ENCODE measurements at regions of chr1 and their contacts with region 1.

Region 1: DNA sequence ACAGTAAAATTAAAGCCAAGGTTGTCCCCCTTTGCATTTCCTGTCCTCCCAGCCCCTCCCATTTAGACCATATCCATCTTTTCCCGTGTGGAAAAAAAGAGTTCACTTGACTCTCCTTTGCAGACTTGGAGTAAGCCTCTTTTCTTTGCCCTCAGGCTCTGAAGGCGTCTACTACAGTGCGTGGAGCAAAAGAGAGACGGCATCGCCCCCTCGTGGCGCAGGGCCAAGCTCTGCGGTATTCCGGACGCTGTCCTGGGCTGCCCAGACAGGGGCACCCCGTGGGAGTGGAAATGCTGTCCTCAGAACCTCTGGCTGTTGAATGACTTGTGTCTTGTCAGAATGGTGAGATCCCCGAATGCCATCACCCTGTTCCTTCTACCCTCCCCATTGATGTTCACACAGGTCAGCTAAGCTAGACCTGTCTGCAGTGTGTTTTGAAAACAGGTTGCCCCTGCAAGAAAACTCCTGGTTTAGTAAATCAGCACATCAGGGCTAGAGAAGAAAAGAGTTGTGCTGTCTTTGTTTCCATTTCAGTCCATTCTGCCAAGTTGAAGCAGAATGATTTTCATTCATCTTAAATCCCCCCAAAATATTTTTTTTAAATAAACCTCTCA is 12.3 kb upstream of the GJA8 start:
- DNase-seq: peak; percentile 80
- H3K4me3 ChIP-seq: no peak overlapping the region
- H3K27ac ChIP-seq: no peak overlapping the region
- H3K4me1 ChIP-seq: no peaks in the 10 kb centered on the region
- H3K27me3 ChIP-seq: no peaks in the 10 kb centered on the region
- CTCF ChIP-seq: peak; percentile 80

Region 2: DNA sequence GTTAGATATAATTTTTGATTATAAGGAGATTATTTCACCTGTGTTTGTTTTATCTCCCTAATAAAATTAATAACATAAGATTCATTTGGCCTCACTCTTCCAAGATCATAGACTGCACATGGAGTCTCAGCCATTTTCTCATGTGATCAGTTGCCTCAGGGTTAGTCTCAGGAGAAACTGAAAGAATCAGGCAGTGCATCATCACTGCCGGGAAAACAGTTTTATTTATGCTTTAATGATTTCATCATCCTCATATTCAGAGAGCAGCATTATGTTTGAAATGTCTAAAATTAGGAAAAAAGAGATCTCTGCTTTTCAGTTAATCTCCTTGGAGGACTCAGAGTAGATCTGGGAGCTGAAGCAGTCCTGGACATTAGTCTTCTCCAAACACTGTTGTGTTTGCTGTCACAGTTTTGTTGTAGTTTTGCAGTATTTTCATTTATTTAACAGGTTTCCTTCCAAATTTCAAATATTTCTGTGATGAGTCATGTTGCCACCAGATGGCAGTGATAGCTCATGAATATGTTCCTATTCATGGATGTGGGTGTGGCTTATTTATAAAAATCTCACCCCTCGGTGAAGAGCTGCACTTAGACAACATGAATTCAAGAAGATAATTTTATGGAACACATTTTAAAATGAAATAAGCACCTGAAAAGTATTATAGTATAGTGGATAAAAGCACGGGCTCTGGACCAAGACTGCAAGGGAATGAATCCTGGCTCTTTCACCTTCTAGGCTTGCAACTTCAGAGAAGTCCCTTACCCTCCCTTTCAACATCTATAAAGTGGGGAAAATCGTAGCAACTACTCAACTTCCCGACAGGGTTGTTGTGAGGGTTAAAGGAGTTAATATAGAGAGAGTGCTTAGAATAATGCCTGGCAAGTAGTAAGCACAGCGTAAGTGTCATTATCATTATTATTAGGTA is 616.6 kb before region 1 on chr1:
- CTCF ChIA-PET with region 1: interaction called, 5 read pairs
- POLR2A ChIA-PET with region 1: no interaction called
- intact Hi-C with region 1: loop called (anchors 5 kb)
- DNase-seq: peak; percentile 80
- H3K4me3 ChIP-seq: no peak overlapping the region
- H3K27ac ChIP-seq: peak overlapping the region; percentile 17
- H3K4me1 ChIP-seq: peaks cover 10% of the 10 kb centered on the region
- H3K27me3 ChIP-seq: no peaks in the 10 kb centered on the region
- CTCF ChIP-seq: peak; percentile 77

Region 3: GRCh38 chr1:147494998-147495580 is 395.2 kb before region 1 on chr1:
- CTCF ChIA-PET with region 1: interaction called, 7 read pairs
- POLR2A ChIA-PET with region 1: no interaction called
- intact Hi-C with region 1: loop called (anchors 1 kb)
- DNase-seq: peak; percentile 84
- H3K4me3 ChIP-seq: no peak overlapping the region
- H3K27ac ChIP-seq: no peak overlapping the region
- H3K4me1 ChIP-seq: no peaks in the 10 kb centered on the region
- H3K27me3 ChIP-seq: no peaks in the 10 kb centered on the region
- CTCF ChIP-seq: peak; percentile 94

Region 4: GRCh38 chr1:147640553-147641165 is 249.6 kb before region 1 on chr1:
- CTCF ChIA-PET with region 1: no interaction called
- POLR2A ChIA-PET with region 1: no interaction called
- intact Hi-C with region 1: loop called (anchors 5 kb)
- DNase-seq: peak; percentile 91
- H3K4me3 ChIP-seq: no peak overlapping the region
- H3K27ac ChIP-seq: no peak overlapping the region
- H3K4me1 ChIP-seq: no peaks in the 10 kb centered on the region
- H3K27me3 ChIP-seq: no peaks in the 10 kb centered on the region
- CTCF ChIP-seq: peak; percentile 81

Region 5: GRCh38 chr1:147700042-147701006 is 190.0 kb before region 1 on chr1:
- CTCF ChIA-PET with region 1: no interaction called
- POLR2A ChIA-PET with region 1: no interaction called
- intact Hi-C with region 1: loop called (anchors 5 kb)
- DNase-seq: peak; percentile 82
- H3K4me3 ChIP-seq: no peak overlapping the region
- H3K27ac ChIP-seq: no peak overlapping the region
- H3K4me1 ChIP-seq: no peaks in the 10 kb centered on the region
- H3K27me3 ChIP-seq: no peaks in the 10 kb centered on the region
- CTCF ChIP-seq: peak; percentile 92

Region 6: DNA sequence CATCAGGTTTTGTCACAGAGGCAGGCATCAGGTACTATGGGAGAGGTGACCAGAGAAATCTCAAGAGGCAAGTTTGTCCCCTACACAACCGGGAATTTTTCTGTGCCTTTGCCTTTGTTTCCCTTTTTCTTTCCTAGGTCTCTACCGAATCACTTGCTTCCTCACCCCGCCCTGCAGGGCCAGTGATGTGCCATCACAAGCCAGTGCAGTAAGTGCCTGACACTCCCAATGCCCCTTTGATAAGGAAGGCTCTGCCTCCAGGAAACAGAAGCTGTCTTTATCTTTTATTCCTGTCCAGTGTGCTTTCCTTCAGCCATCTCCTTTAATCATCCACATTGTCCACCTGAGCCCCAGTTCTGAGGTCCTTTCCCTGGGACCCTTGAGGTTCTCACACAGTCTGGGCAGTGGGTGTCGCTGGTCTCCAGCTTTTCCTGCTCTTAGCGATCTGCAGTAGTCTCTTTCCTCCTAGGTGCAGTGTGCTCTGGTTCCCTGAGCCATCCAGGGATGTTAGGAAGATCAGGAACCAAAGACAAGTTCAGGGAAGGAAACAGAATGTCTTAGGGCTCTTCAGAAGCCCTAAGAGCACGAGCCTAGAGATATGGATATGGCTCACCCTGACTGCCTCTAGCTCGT is 166.5 kb before region 1 on chr1:
- CTCF ChIA-PET with region 1: interaction called, 6 read pairs
- POLR2A ChIA-PET with region 1: no interaction called
- intact Hi-C with region 1: loop called (anchors 1 kb)
- DNase-seq: peak; percentile 39
- H3K4me3 ChIP-seq: no peak overlapping the region
- H3K27ac ChIP-seq: no peak overlapping the region
- H3K4me1 ChIP-seq: no peaks in the 10 kb centered on the region
- H3K27me3 ChIP-seq: peaks cover 11% of the 10 kb centered on the region
- CTCF ChIP-seq: peak; percentile 58

Region 7: GRCh38 chr1:147786536-147786935 is 103.7 kb before region 1 on chr1:
- CTCF ChIA-PET with region 1: no interaction called
- POLR2A ChIA-PET with region 1: no interaction called
- intact Hi-C with region 1: no loop called
- DNase-seq: no peak
- H3K4me3 ChIP-seq: no peak overlapping the region
- H3K27ac ChIP-seq: no peak overlapping the region
- H3K4me1 ChIP-seq: no peaks in the 10 kb centered on the region
- H3K27me3 ChIP-seq: peaks cover 31% of the 10 kb centered on the region
- CTCF ChIP-seq: no peak